ENCODE measurements at regions of chr10 and their contacts with region 1.

Region 1: DNA sequence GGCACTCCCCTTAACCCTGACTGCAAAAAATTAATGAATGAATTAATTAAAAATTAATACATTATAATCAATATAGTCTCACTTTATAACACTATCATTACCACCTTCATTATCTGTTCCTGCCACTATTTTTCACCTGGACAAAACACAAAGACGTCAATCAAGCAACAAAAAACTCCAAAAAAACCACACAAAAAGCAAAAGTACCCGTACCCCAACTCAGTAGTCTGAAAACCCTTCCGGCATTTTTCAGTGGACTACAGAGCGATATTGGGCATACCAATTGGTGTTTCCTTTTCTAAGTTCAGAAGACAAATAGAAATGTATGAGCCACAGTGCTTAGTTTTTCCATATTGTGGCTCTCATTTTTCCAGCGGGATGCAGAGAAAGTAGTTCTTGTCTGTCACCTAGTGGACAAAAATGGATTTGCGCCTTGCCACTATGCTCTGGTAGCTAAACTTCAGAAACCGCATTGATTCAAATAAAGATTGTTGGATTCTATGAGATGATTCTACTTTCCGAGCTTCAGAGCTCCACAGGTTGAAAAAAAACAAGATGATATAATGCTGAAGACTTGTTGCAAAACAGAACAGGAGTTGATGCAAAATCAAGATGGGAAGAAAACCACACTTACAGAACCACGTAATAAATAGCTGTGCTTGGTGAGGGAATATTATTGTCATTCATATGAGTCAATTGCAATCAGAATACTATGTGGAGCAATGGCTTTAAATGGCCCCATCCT is 50.6 kb upstream of the ITGB1 start:
- DNase-seq: no peak
- ATAC-seq: no peak

Region 2: DNA sequence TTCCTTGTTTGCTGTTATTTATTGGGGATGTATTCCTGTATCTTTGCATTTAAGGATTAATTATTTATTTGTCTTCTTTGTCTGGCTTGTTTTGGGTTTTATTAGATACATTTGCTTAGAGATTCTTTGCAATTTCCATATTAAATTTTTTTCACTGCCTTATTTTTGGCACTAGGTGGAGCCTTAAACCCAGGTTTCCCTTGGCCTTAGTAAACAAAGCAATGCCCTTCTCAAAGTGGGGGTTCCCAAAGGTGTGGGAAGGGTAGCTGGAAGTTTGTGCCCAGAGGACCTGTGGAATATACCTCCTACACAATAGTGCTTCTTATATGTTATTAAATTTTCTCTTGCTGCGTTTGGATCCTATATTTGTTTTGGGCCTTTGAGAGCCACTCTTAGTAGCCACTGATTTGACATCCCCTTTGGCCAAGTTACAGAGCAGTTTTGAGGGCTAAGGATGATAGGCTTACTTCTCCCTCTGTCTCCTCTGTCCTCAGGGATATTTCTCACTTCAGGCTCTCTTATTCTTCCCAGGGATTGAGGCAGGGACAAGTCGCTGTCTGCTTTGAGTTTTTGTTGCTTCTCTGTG is 213.0 kb before region 1 on chr10:
- intact Hi-C with region 1: loop called (anchors 1 kb)
- DNase-seq: no peak
- ATAC-seq: no peak

Region 3: DNA sequence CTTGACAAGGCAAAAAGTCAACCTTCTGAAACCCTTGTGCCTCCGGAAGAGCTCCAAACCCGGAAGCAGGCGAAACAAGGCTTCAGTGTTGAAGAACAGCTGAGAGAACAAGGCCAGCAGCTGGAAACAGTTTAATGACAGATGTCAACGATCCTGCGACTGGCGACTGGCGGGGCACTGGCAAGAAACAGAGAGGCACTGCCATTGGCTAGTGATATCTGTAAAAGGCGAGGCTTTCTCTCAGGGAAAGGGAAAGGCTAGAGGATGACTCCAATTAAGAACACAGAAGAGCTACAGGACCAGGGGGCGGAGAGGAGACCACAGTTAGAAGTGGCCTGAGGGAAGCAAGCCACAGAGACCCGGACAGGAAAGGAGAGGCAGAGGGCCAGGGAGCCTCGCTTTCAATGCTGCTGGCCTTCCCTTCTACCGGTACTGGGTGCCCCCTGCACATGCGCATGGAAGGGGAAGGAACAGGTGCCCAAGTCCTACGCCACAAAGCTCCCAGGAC is 70.1 kb before region 1 on chr10:
- intact Hi-C with region 1: no loop called
- DNase-seq: peak; percentile 56
- ATAC-seq: peak; percentile 53

Region 4: DNA sequence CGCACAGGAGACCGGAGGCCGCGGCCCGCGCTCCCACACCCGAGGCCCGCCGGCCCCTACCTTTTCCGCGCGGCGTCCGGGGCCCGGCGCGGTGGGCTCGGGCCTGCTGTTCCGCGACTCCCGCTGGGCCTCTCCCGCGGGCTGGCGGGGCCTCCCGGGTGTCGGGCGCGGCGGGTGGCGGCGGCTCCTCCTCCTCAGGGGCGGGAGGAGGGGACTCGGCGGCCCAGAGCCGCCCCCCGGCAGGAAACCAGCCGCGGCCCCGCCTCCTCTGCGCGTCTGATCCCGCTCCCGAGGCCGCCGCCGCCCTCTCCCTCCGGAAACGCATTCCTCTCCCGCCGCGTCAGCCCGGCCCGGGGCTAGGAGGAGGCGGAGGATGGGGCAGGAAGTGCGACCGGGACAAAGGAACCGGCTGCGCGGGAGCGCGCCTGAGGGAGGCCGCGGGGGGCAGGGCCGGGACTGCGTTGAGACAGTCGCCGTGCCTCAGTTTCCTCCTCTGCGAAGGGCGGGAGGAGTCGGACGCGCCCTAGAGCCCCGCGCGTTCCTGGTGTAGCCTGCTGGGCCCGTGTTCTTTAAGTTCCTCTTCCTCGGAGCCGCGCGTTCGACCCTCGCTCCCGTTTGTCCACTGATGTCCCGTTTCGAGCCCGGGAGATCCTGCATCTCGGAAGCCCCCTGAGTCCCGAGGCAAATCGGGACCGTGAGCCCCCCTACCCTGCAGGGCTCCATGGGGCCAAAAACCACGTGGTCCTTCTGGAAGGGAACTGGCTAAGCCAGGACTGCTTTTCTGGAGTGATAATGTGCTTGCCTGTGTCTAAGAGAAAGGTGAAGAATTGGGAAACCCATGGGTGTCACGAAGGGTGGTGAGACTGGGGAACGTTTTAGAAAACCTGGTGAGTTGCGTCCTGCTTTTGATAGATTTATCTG is 50.3 kb before region 1 on chr10 and contains the start of gene ITGB1:
- intact Hi-C with region 1: loop called (anchors 2 kb)
- DNase-seq: peak; percentile 98
- ATAC-seq: peak; percentile 97
- total RNA-seq, gene ITGB1: 583 TPM

Region 5: DNA sequence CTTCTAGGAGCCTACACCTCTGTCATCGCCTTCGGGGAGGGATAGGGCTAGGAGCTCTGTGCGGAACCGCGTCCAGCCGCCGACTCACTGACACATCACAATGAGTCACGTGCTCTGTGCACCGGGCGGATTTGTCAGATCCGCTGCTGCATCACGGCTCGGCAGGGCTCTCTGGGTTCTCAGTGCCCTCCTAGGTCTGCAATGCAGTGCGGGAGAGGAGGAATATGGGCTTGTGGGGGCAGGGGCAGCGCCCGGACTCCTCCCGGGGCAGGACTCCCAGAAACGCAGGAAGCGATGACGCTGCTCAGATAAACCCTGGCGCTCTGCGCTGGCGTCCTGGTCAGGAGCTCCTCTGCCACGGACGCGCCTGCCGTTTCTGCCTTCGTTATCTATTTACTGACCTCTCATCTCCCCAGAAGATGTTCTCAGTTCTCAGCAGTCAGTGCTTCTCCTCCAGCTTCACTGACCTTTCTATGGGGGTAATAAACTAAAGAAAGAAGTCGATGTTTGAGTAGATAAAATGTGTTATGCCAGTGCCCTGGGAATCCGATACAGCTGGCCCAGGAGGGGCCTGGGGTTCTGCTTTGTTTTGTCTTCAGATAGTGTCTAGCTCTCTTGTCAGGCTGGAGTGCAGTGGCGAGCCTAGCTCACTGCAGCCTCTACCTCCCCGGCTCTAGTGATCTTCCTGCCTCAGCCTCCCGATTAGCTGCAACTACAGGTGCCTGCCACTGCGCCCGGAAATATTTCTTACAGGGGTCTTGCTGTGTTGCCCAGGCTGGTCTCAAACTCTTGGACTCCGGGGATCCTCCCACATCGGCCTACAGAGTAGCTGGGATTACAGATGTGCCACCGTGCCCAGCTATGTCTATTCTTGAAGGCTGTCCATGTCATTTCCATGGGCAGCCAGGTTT is 27.9 kb before region 1 on chr10:
- intact Hi-C with region 1: loop called (anchors 2 kb)
- DNase-seq: peak; percentile 95
- ATAC-seq: peak; percentile 96

Region 6: GRCh38 chr10:33115738-33116719 is 107.4 kb after region 1 on chr10:
- intact Hi-C with region 1: loop called (anchors 10 kb)
- DNase-seq: no peak
- ATAC-seq: peak; percentile 40

Region 7: GRCh38 chr10:33258967-33259366 is 250.3 kb after region 1 on chr10:
- intact Hi-C with region 1: no loop called
- DNase-seq: no peak
- ATAC-seq: no peak